ENCODE measurements at regions of chr11 and their contacts with region 1.

Region 1: GRCh38 chr11:27485930-27486773 is 13.6 kb upstream of the LGR4 start:
- DNase-seq: no peak
- H3K4me3 Mint-ChIP-seq: no peak overlapping the region
- H3K27ac Mint-ChIP-seq: no peak overlapping the region
- H3K4me1 Mint-ChIP-seq: no peaks in the 10 kb centered on the region
- H3K27me3 Mint-ChIP-seq: no peaks in the 10 kb centered on the region

Region 2: DNA sequence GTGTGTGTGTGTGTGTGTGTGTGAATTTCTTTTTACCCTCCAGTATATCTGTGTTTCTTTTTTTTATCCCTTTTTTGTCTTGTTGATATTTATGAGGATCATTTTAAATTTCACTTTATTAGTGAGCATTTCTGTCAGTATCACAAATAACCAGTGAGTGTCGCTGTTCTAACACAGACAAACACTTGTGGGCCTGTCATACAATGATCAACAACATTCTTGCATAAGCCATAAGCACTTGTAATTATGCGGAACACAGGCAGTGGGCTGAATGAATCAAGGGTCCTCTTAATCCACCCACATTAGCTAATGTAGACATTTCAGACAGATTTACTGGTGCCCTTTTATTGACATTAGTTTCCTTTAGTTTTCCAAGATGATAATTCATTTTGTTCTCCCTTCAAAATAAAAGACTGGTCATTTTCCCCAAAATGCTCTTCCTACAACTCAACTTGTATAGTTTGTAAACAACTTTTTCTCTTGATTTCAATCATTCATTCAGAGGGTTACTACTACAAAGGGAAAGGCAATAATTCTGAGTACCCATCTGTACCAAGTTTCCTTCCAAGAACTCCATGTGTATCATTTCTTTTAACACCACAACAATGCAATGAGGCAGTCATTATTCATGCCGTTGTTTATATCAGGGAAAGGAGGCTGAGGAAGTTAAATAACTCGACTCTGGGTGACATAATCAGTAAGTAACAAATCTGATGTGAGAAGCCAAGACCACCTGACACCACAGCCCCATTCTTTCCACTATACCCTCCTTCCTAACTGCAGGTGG is 1188.8 kb before region 1 on chr11:
- CTCF ChIA-PET with region 1: interaction called, 3 read pairs
- POLR2A ChIA-PET with region 1: no interaction called
- intact Hi-C with region 1: loop called (anchors 2 kb)
- DNase-seq: no peak
- H3K4me3 Mint-ChIP-seq: no peak overlapping the region
- H3K27ac Mint-ChIP-seq: no peak overlapping the region
- H3K4me1 Mint-ChIP-seq: no peaks in the 10 kb centered on the region
- H3K27me3 Mint-ChIP-seq: no peaks in the 10 kb centered on the region

Region 3: DNA sequence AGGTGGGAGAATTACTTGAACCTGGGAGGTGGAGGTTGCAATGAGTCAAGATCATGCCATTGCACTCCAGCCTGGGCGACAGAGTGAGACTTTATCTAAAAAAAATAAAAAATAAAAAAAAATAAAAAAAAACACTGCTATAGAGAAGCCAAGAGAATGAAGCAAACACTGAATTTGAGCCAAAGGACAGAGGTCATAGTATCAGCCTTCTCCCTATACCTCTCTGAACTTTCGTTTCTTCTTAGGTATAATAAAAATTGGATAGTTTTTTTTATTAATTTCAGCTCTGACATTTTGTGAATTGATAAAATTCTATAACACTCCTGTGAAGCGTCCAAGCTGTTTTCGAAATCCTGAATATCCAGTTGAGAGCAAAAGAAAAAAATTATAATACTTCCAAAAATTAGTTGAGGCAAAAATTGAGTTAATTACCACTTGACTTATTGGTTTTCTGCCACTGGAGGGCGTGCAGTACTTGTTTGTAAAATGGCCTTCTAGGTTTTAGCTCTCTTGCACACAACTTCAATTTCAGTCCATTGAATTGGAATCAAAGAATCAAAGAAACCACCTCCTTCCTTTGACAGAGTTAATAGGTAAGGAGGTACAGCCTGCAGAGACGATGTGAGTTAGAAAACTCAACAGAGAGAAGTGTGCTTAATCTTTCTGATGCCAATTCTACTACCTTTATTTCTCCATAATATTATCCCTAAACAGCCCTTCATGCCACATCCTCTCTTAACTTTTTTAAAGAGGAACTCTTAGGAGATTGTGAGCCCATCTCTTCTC is 302.3 kb before region 1 on chr11:
- CTCF ChIA-PET with region 1: interaction called, 103 read pairs
- POLR2A ChIA-PET with region 1: no interaction called
- intact Hi-C with region 1: loop called (anchors 1 kb)
- DNase-seq: peak; percentile 36
- H3K4me3 Mint-ChIP-seq: no peak overlapping the region
- H3K27ac Mint-ChIP-seq: no peak overlapping the region
- H3K4me1 Mint-ChIP-seq: no peaks in the 10 kb centered on the region
- H3K27me3 Mint-ChIP-seq: peaks cover 4% of the 10 kb centered on the region

Region 4: DNA sequence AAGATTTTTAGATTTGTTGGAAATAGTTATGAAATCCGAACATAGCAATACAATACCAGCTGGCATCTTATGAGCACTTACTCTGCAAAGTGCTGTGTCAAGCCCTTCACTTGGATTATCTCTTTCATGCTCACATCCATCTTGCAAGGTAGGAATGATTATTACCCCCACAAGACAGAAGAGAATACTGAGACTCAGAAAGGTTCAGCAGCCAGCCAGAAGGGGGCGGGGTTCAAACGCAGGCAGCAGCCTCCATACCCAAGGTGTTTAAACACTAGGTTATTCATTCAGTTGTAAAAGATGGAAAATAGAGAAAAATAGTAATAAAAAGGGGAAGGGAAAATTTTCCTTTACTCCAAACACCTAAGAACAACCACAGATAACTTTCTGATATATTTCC is 281.6 kb before region 1 on chr11:
- CTCF ChIA-PET with region 1: interaction called, 8 read pairs
- POLR2A ChIA-PET with region 1: no interaction called
- intact Hi-C with region 1: loop called (anchors 1 kb)
- DNase-seq: peak; percentile 36
- H3K4me3 Mint-ChIP-seq: no peak overlapping the region
- H3K27ac Mint-ChIP-seq: no peak overlapping the region
- H3K4me1 Mint-ChIP-seq: no peaks in the 10 kb centered on the region
- H3K27me3 Mint-ChIP-seq: no peaks in the 10 kb centered on the region

Region 5: GRCh38 chr11:27296497-27296896 is 189.7 kb before region 1 on chr11:
- CTCF ChIA-PET with region 1: interaction called, 14 read pairs
- POLR2A ChIA-PET with region 1: no interaction called
- intact Hi-C with region 1: no loop called
- DNase-seq: no peak
- H3K4me3 Mint-ChIP-seq: no peak overlapping the region
- H3K27ac Mint-ChIP-seq: no peak overlapping the region
- H3K4me1 Mint-ChIP-seq: peaks cover 6% of the 10 kb centered on the region
- H3K27me3 Mint-ChIP-seq: peaks cover 5% of the 10 kb centered on the region

Region 6: DNA sequence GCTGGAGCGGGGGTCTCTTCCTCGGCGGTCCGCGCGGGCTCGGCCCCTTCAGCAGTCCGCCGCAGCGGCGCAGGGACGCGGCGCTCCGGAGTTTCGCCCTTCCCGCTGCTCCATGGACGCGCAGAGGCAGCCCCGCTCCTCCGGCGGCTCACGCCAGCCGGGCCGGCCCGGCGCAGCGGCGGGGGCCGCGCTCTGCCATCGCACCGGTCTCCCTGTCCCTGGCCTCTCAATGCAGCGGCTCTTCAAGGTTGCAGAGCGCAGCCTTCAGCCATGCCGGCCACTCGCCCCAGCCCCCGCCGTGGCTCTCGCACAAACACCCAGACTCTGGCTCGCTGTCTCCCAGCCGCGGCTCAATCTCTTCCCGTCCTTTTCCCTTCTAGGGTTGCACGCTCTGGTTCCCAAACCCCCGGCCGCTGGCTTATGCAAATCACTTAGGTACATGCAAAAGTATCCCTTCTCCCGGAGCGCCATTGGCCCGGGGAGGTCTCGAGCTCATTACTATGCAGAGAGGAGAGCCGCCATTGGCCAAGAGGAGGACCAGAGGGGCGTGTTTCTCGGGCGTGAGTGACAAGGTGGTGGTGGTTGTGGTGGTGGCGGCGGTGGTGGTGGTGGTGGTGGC is 13.6 kb before region 1 on chr11 and contains the start of gene LGR4:
- CTCF ChIA-PET with region 1: interaction called, 17 read pairs
- POLR2A ChIA-PET with region 1: no interaction called
- intact Hi-C with region 1: no loop called
- DNase-seq: peak; percentile 79
- H3K4me3 Mint-ChIP-seq: peak within 1 kb of the TSS; percentile 86
- H3K27ac Mint-ChIP-seq: no peak within 1 kb of the TSS
- H3K4me1 Mint-ChIP-seq: peaks cover 16% of the 10 kb centered on the region
- H3K27me3 Mint-ChIP-seq: peaks cover 20% of the 10 kb centered on the region
- total RNA-seq, gene LGR4: 0.22 to 0.67 TPM

Region 7: DNA sequence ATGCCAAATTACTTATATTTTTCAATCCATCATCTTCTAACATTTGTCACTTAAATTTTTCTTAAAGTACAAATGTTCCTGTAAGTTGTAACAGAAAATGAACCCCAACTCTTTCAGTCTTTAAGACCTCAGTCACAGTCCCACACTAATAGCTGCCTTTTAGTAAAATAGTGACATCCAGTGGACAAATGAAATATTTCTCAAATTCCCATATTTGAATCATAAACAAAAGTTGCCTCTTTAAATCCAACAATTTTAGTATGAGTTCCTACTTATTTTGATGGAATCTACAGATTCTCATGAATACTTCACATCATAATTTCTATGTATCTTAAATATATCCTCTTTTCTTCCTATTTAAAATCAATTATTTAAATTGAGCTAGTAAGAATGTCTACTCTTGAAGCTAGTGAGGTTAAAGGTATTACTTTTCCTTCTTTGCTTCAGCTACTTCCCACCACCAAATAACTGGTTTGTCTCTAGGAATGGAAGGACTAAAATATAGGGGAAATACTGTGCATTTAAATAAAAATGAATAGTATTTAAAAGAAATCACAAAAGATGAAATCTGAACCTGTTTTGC is 11.2 kb after region 1 on chr11:
- CTCF ChIA-PET with region 1: interaction called, 75 read pairs
- POLR2A ChIA-PET with region 1: no interaction called
- intact Hi-C with region 1: no loop called
- DNase-seq: no peak
- H3K4me3 Mint-ChIP-seq: no peak overlapping the region
- H3K27ac Mint-ChIP-seq: no peak overlapping the region
- H3K4me1 Mint-ChIP-seq: peaks cover 21% of the 10 kb centered on the region
- H3K27me3 Mint-ChIP-seq: no peaks in the 10 kb centered on the region

Region 8: DNA sequence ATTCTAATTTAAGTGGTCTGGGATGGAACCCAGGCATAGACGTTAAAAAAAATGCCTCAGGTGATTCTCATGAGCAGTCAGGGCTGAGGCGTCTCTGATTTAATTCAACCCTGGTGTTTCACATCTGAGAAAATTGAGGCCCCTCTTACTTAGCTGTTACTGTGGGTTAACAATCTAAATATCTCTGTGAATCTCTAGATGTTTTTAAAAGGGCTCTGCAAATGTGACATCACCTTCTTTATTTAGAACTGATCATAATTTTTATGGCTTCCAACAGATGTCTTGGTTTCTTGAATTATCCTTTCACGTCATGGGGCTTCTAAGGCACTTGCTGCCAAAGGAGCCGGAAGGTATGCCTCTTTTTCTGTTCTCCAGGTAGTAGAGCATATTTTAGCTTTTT is 96.5 kb after region 1 on chr11:
- CTCF ChIA-PET with region 1: no interaction called
- POLR2A ChIA-PET with region 1: no interaction called
- intact Hi-C with region 1: no loop called
- DNase-seq: no peak
- H3K4me3 Mint-ChIP-seq: no peak overlapping the region
- H3K27ac Mint-ChIP-seq: no peak overlapping the region
- H3K4me1 Mint-ChIP-seq: no peaks in the 10 kb centered on the region
- H3K27me3 Mint-ChIP-seq: no peaks in the 10 kb centered on the region

Region 9: GRCh38 chr11:27635567-27636037 is 149.4 kb after region 1 on chr11:
- CTCF ChIA-PET with region 1: no interaction called
- POLR2A ChIA-PET with region 1: no interaction called
- intact Hi-C with region 1: no loop called
- DNase-seq: no peak
- H3K4me3 Mint-ChIP-seq: no peak overlapping the region
- H3K27ac Mint-ChIP-seq: no peak overlapping the region
- H3K4me1 Mint-ChIP-seq: no peaks in the 10 kb centered on the region
- H3K27me3 Mint-ChIP-seq: no peaks in the 10 kb centered on the region

Measured in activated CD4-positive, alpha-beta memory T cell treated with anti-CD3 and anti-CD28 coated beads for 36 hours (primary cell).